Breast epithelium (tissue), 4 donors: ENCODE measurements at regions of chr17 and their contacts with region 1.

Region 1: DNA sequence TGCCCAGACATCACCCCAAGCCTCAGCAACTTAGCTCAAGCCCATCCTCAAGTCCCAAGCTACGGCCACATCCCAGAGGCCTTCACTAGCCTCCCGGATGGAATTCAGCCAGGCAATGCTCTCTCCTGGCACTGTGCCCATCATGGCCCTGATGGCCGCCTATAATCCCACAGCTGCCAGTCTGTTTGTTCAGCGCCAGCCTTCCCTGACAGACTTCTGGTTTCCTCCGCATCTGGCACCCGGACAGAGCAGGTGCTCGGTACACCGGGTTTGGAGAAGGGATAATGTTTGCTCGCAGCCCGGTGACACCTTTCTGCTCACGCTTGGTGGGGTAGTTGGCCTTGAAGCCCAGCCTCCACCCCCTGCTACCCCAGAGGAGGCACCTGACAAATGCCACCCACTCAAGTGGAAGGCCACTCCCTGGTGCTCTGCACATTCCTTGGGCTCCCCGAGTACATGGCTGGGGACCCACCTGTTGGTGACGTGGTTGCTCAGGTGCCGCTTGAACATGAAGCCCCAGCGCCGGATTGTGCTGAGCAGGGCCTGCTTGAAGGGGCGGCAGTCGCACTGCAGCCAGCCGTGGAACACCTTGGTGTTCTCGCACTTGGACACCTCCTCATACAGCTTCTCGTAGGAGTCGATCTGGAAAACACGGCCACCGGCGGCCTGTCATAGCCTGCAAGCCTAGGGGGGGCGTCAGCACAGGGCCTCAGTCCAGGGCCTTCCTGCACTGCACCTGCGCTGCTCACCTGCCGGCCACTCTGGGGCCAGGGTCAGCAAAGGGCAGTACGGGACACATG is 47.1 kb downstream of the DNAH17 start:
- DNase-seq: no peak
- H3K4me3 ChIP-seq: no peak overlapping the region
- H3K27ac ChIP-seq: no peak overlapping the region
- H3K4me1 ChIP-seq: no peaks in the 10 kb centered on the region
- H3K27me3 ChIP-seq: no peaks in the 10 kb centered on the region
- CTCF ChIP-seq: no peak
- POLR2A ChIP-seq: no peak

Region 2: DNA sequence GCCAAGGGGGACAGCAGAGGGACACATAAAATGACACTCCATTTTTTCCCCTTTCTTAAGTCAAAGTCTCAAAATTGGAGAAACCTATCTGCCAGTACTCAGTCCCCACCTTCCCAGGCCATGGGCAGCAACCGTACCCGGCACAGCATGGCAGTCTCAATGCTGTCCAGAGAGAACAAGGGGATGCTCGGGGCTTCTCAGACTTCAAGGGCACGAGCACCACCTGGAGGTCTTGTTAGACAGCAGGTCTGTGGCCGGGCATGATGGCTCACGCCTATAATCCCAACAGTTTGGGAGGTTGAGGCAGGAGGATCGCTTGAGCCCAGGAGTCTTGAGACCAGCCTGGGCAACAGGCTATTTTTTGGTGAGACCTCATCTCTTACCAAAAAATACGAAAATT is 43.9 kb after region 1 on chr17:
- intact Hi-C with region 1: no loop called
- DNase-seq: no peak
- H3K4me3 ChIP-seq: no peak overlapping the region
- H3K27ac ChIP-seq: no peak overlapping the region
- H3K4me1 ChIP-seq: no peaks in the 10 kb centered on the region
- H3K27me3 ChIP-seq: no peaks in the 10 kb centered on the region
- CTCF ChIP-seq: no peak
- POLR2A ChIP-seq: no peak

Region 3: DNA sequence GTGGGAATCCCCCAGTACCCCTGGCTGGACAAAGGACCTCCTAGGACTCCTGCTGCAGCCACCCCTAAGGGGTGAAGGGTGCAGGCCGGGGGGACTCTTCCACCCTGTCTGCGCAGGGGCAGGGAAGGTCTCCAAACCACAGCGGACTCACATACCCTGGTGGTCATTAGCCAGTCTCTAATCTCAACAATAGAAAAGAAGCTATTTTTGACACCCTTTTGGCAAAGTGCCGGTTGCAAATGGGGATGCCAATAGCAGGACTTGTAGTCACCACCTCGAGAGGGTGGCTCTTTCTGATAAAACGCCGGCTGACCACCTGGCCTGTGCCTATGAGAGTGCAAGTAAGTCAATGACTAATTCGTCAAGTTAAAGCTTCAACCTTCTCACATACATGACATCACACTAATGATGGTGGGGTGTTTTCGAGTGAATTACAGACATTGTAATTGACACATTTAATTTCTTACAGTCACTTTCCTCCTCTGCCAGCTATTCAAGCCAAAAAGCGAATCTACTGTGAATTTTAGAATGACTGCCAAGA is 70.2 kb after region 1 on chr17:
- intact Hi-C with region 1: loop called (anchors 2 kb)
- DNase-seq: no peak
- H3K4me3 ChIP-seq: no peak overlapping the region
- H3K27ac ChIP-seq: no peak overlapping the region
- H3K4me1 ChIP-seq: no peaks in the 10 kb centered on the region
- H3K27me3 ChIP-seq: no peaks in the 10 kb centered on the region
- CTCF ChIP-seq: no peak
- POLR2A ChIP-seq: no peak